Activated CD4-positive, alpha-beta T cell treated with anti-CD3 and anti-CD28 coated beads for 36 hours (primary cell): ENCODE measurements at regions of chr20 and their contacts with region 1.

Region 1: GRCh38 chr20:26295006-26295405 is 598.4 kb upstream of the ZNF337 start:
- DNase-seq: no peak
- ATAC-seq: no peak
- H3K4me3 Mint-ChIP-seq: no peak overlapping the region
- H3K27ac Mint-ChIP-seq: no peak overlapping the region
- H3K4me1 Mint-ChIP-seq: peaks cover 15% of the 10 kb centered on the region
- H3K27me3 Mint-ChIP-seq: no peaks in the 10 kb centered on the region

Region 2: GRCh38 chr20:25508078-25508770 is 786.8 kb before region 1 on chr20:
- CTCF ChIA-PET with region 1: no interaction called
- POLR2A ChIA-PET with region 1: no interaction called
- intact Hi-C with region 1: no loop called
- DNase-seq: no peak
- ATAC-seq: no peak
- H3K4me3 Mint-ChIP-seq: no peak overlapping the region
- H3K27ac Mint-ChIP-seq: no peak overlapping the region
- H3K4me1 Mint-ChIP-seq: no peaks in the 10 kb centered on the region
- H3K27me3 Mint-ChIP-seq: no peaks in the 10 kb centered on the region

Region 3: DNA sequence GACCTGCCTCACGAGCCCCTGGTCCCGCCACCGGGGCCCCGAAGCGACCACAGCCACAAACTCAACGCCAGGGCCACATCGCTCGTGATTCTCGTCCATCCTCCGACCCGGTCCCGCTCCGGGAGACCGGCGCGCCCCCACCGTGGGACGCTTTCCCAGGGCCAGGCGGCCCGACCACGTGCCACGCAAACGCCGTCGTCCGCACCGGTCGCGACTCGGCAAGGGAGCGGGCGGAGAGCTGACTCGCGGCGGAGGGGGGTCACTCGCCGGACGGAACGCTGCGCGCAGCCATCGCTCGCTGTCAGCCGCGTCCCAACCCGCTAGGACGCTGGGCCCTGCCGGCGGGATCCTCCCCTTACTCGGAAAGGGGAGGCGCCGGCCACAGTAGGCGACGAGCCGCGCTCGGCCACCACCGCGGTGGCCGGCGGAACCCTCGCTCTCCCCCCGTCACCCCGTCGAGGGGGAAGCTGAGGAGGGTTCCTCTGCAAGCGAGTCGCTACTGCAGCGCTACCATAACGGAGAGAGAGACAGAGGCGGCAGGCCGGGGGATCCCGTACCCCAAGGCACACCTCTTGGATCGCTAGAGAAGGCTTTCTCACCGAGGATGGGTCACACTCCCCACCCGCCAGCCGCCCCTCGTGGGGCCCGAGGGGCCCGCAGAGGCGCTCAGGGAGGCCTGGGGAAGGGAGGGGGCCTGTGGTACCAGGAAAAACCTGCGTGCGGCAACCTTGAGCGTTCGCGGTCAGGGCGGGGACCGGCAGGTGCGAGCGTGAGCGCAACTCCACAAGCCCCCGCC is 86.5 kb before region 1 on chr20:
- CTCF ChIA-PET with region 1: no interaction called
- POLR2A ChIA-PET with region 1: no interaction called
- intact Hi-C with region 1: loop called in 1 of 2 experiments (anchors 5 kb)
- DNase-seq: peak; percentile 47
- ATAC-seq: peak; percentile 55
- H3K4me3 Mint-ChIP-seq: no peak overlapping the region
- H3K27ac Mint-ChIP-seq: no peak overlapping the region
- H3K4me1 Mint-ChIP-seq: peaks cover 7% of the 10 kb centered on the region
- H3K27me3 Mint-ChIP-seq: peaks cover 20% of the 10 kb centered on the region

Region 4: DNA sequence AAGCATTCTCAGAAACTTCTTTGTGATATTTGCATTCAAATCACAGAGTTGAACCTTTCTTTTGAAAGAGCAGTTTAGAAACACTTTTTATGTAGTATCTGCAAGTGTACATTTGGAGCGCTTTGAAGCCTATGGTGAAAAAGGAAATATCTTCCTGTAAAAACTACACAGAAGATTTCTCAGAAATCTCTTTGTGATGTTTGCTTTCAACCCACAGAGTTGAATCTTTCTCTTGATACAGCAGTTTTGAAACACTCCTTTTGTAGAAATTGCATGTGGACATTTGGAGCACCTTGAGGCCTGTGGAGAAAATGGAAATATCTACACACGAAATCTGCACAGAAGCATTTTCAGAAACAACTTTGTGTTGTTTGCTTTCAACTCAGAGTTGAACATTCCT is 14.0 kb after region 1 on chr20:
- CTCF ChIA-PET with region 1: no interaction called
- POLR2A ChIA-PET with region 1: no interaction called
- intact Hi-C with region 1: no loop called
- DNase-seq: no peak
- ATAC-seq: no peak
- H3K4me3 Mint-ChIP-seq: no peak overlapping the region
- H3K27ac Mint-ChIP-seq: peak overlapping the region; percentile 78
- H3K4me1 Mint-ChIP-seq: peaks cover 56% of the 10 kb centered on the region
- H3K27me3 Mint-ChIP-seq: no peaks in the 10 kb centered on the region